Endothelial cell of umbilical vein (primary cell): ENCODE measurements at regions of chr5 and their contacts with region 1.

Region 1: DNA sequence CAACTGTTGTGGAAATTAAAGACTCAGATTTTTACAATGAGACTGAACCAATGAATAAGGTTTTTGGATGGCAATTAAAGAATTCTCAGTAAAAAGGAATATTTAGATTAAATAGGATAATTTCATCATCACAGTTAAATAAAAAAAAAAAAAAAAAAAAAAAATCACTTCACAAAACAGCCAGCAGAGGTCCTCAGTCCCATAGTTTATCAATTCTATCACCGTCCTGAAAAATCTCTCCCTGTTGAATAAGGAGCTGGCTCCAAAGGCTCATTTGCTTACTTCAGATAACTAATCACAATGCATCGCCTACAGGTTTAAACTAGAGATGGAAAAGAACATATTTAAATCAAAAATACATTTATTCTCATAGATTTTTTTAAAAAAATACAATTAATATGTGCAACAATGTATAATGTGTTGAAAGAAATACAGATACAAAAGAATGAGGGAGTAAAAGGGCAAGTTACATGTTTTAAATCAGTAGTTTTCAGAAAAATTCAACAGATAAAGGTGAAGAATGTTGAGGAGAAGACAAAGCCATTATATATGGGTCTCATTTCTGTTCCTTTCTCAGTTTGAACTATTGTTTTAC is 175.8 kb upstream of the CHD1 start:
- DNase-seq: peak; percentile 67
- H3K4me3 ChIP-seq: no peak overlapping the region
- H3K27ac ChIP-seq: no peak overlapping the region
- H3K4me1 ChIP-seq: peaks cover 8% of the 10 kb centered on the region
- H3K27me3 ChIP-seq: no peaks in the 10 kb centered on the region
- CTCF ChIP-seq: peak; percentile 29 to 47
- POLR2A ChIP-seq: no peak

Region 2: DNA sequence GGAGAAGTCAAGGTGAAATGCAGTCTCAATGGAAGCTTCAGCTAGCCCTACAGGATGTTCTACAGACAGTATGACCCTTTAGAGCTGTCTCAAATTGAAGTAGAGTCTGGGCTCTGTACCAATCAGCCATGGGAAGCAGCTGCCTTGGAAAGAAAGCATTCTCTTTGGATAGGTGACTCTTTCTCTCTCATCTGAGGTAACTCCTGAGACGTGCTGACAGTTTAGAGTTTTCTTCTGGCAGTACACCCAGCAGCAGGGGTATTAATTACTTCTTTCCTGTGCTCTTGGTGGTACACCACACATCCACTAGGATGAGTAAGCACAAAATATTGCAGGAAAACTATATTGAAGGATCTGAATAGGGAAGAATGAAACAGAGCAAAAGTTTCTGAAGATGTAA is 660.8 kb before region 1 on chr5:
- CTCF ChIA-PET with region 1: no interaction called
- POLR2A ChIA-PET with region 1: no interaction called
- dilution Hi-C with region 1: no loop called
- intact Hi-C with region 1: no loop called
- DNase-seq: no peak
- H3K4me3 ChIP-seq: no peak overlapping the region
- H3K27ac ChIP-seq: no peak overlapping the region
- H3K4me1 ChIP-seq: no peaks in the 10 kb centered on the region
- H3K27me3 ChIP-seq: no peaks in the 10 kb centered on the region
- CTCF ChIP-seq: no peak
- POLR2A ChIP-seq: no peak

Region 3: DNA sequence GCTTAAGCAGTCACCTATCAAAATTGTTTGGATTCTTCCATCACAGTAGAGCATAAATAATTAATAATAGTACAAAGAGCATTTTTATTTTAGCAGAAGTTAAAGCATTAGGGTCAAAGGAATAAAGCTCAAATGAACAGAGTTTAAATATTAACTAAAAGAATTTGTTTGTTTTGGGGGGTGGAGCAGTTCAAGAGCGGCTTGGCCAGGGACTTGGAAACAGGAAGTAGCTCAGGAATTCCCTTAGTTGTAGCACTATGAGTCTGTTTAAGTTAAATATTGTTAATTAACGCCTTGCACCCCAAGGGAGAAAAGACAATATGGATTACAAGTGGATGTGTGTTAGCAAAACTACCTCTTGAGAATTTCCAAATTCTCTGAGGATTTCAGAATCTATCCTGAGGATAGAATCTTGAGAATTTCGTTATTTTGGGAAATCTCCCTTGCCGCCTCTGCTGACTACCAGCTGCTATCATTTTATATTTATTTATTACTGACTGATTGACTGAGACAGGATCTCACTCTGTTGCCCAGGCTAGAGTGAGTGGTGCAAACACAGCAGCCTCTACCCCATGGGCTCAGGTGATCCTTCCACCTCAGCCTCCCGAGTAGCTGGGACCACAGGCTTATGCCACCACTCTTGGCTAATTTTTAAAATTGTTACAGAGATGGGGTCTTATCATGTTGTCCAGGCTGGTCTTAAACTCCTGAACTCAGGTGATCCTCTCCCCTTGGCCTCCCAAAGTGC is 79.2 kb before region 1 on chr5:
- CTCF ChIA-PET with region 1: no interaction called
- POLR2A ChIA-PET with region 1: no interaction called
- dilution Hi-C with region 1: no loop called
- intact Hi-C with region 1: no loop called
- DNase-seq: peak; percentile 18
- H3K4me3 ChIP-seq: no peak overlapping the region
- H3K27ac ChIP-seq: no peak overlapping the region
- H3K4me1 ChIP-seq: peaks cover 4% of the 10 kb centered on the region
- H3K27me3 ChIP-seq: no peaks in the 10 kb centered on the region
- CTCF ChIP-seq: no peak
- POLR2A ChIP-seq: no peak

Region 4: GRCh38 chr5:99088309-99088708 is 16.3 kb before region 1 on chr5:
- CTCF ChIA-PET with region 1: interaction called, 14 read pairs
- POLR2A ChIA-PET with region 1: no interaction called
- dilution Hi-C with region 1: no loop called
- intact Hi-C with region 1: no loop called
- DNase-seq: no peak
- H3K4me3 ChIP-seq: no peak overlapping the region
- H3K27ac ChIP-seq: no peak overlapping the region
- H3K4me1 ChIP-seq: no peaks in the 10 kb centered on the region
- H3K27me3 ChIP-seq: no peaks in the 10 kb centered on the region
- CTCF ChIP-seq: no peak
- POLR2A ChIP-seq: no peak

Region 5: GRCh38 chr5:99122976-99123375 is 18.3 kb after region 1 on chr5:
- CTCF ChIA-PET with region 1: interaction called, 17 read pairs
- POLR2A ChIA-PET with region 1: no interaction called
- dilution Hi-C with region 1: no loop called
- intact Hi-C with region 1: no loop called
- DNase-seq: no peak
- H3K4me3 ChIP-seq: no peak overlapping the region
- H3K27ac ChIP-seq: no peak overlapping the region
- H3K4me1 ChIP-seq: no peaks in the 10 kb centered on the region
- H3K27me3 ChIP-seq: no peaks in the 10 kb centered on the region
- CTCF ChIP-seq: no peak
- POLR2A ChIP-seq: no peak

Region 6: GRCh38 chr5:99169309-99169708 is 64.7 kb after region 1 on chr5:
- CTCF ChIA-PET with region 1: interaction called, 19 read pairs
- POLR2A ChIA-PET with region 1: no interaction called
- dilution Hi-C with region 1: no loop called
- intact Hi-C with region 1: no loop called
- DNase-seq: peak; percentile 70
- H3K4me3 ChIP-seq: no peak overlapping the region
- H3K27ac ChIP-seq: no peak overlapping the region
- H3K4me1 ChIP-seq: peaks cover 5% of the 10 kb centered on the region
- H3K27me3 ChIP-seq: no peaks in the 10 kb centered on the region
- CTCF ChIP-seq: peak in 1 of 2 donors; percentile 34
- POLR2A ChIP-seq: no peak

Region 7: DNA sequence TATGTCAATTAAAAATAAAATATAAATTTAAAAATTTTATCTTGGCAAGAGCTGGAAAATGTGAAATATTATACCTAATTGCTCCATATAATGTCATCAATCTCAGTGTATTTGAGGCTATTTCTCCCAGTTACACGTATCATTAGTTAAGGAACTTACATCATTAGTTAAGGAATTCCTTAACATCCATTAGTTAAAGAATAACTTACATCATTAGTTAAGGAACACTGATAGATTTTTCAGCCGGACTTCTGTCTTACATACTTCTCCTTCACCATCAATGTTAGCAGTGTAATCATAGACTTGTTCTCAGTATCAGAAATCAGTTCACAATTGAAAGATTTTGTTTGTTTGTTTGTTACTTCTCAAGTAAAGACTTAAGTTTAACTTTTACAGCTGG is 348.5 kb after region 1 on chr5:
- CTCF ChIA-PET with region 1: no interaction called
- POLR2A ChIA-PET with region 1: no interaction called
- dilution Hi-C with region 1: no loop called
- intact Hi-C with region 1: no loop called
- DNase-seq: no peak
- H3K4me3 ChIP-seq: no peak overlapping the region
- H3K27ac ChIP-seq: no peak overlapping the region
- H3K4me1 ChIP-seq: no peaks in the 10 kb centered on the region
- H3K27me3 ChIP-seq: no peaks in the 10 kb centered on the region
- CTCF ChIP-seq: no peak
- POLR2A ChIP-seq: no peak

Region 8: GRCh38 chr5:100311807-100312206 is 1207.2 kb after region 1 on chr5:
- CTCF ChIA-PET with region 1: interaction called, 98 read pairs
- POLR2A ChIA-PET with region 1: no interaction called
- dilution Hi-C with region 1: no loop called
- intact Hi-C with region 1: loop called (anchors 1 kb)
- DNase-seq: peak; percentile 71
- H3K4me3 ChIP-seq: no peak overlapping the region
- H3K27ac ChIP-seq: no peak overlapping the region
- H3K4me1 ChIP-seq: no peaks in the 10 kb centered on the region
- H3K27me3 ChIP-seq: no peaks in the 10 kb centered on the region
- CTCF ChIP-seq: no peak
- POLR2A ChIP-seq: no peak

Region 9: DNA sequence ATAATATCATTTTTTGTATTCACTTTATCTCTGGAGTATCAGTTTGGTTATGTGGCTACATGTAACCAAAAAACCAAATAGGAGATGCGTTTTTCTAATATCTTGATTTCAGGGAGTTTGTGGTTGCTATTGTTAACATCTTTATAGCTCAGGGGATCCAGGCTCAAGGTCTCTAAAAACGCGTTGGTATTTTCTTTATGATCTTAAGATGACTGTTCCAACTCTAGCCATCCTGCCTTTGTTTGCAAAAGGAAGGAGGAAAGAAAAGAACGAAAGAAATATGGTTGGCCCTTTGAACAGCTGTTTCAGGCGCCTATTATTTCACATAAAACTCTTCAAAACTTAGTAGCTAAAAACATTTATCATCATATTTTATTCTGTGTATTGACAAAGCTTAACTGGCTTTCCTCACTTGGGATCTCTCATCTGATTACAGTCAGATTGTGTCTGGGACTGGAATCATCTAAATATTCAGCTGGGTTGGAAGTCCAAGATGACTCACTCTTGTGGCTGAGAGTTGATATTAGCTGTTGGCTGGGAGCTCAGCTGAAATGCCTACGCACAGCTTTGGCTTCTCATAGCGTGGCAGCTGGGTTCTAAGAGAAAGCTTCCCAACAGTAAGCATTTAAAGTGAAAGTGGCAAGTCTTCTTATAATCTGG is 1490.6 kb after region 1 on chr5:
- CTCF ChIA-PET with region 1: interaction called, 10 read pairs
- POLR2A ChIA-PET with region 1: no interaction called
- dilution Hi-C with region 1: no loop called
- intact Hi-C with region 1: no loop called
- DNase-seq: peak; percentile 96
- H3K4me3 ChIP-seq: peak overlapping the region in 2 of 3 experiments; percentile 2 to 54
- H3K27ac ChIP-seq: peak overlapping the region; percentile 87
- H3K4me1 ChIP-seq: peaks cover 21% of the 10 kb centered on the region
- H3K27me3 ChIP-seq: no peaks in the 10 kb centered on the region
- CTCF ChIP-seq: no peak
- POLR2A ChIP-seq: no peak

Region 10: GRCh38 chr5:101045689-101046088 is 1941.1 kb after region 1 on chr5:
- CTCF ChIA-PET with region 1: interaction called, 4 read pairs
- POLR2A ChIA-PET with region 1: no interaction called
- dilution Hi-C with region 1: no loop called
- intact Hi-C with region 1: loop called (anchors 10 kb)
- DNase-seq: peak; percentile 55
- H3K4me3 ChIP-seq: no peak overlapping the region
- H3K27ac ChIP-seq: no peak overlapping the region
- H3K4me1 ChIP-seq: no peaks in the 10 kb centered on the region
- H3K27me3 ChIP-seq: no peaks in the 10 kb centered on the region
- CTCF ChIP-seq: no peak
- POLR2A ChIP-seq: no peak